Activated CD4-positive, alpha-beta T cell treated with anti-CD3 and anti-CD28 coated beads for 36 hours (primary cell): ENCODE measurements at regions of chr11 and their contacts with region 1.

Region 1: DNA sequence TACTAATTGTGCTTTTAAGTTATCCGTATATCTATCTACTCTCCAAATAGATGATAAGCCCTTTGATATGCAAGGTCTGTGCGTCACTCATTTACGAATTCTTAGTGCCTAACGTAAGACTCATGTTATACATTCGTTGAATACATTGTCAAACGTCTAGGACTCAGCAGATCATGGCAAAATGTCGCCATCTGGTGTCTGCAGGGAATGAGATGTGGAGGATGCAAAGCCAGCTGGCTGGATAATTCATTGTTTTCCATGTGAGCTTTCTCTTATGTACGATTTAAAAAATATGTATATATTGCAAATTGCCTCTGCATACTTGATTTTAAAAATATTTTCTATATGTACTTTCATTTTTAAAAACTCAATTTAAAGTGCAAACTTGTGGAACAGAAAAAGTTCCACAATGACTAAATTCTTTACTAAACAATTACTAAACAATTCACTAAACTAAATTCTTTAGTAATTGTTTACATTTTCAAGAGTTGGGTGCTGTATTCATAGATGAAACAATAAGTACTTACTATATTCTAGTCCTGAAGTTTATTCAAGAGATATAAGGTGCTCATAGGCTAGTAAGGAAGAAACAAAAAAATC is 33.8 kb downstream of the ZNF202 start:
- DNase-seq: peak; percentile 81
- ATAC-seq: peak; percentile 85
- H3K4me3 Mint-ChIP-seq: no peak overlapping the region
- H3K27ac Mint-ChIP-seq: no peak overlapping the region
- H3K4me1 Mint-ChIP-seq: no peaks in the 10 kb centered on the region
- H3K27me3 Mint-ChIP-seq: peaks cover 12% of the 10 kb centered on the region

Region 2: GRCh38 chr11:123580557-123581275 is 127.0 kb before region 1 on chr11:
- CTCF ChIA-PET with region 1: interaction called, 22 read pairs
- POLR2A ChIA-PET with region 1: no interaction called
- intact Hi-C with region 1: loop called (anchors 1 kb)
- DNase-seq: peak; percentile 84
- ATAC-seq: peak; percentile 89
- H3K4me3 Mint-ChIP-seq: no peak overlapping the region
- H3K27ac Mint-ChIP-seq: no peak overlapping the region
- H3K4me1 Mint-ChIP-seq: peaks cover 10% of the 10 kb centered on the region
- H3K27me3 Mint-ChIP-seq: no peaks in the 10 kb centered on the region

Region 3: GRCh38 chr11:123690485-123690884 is 17.2 kb before region 1 on chr11:
- CTCF ChIA-PET with region 1: interaction called, 13 read pairs
- POLR2A ChIA-PET with region 1: no interaction called
- intact Hi-C with region 1: no loop called
- DNase-seq: peak; percentile 48
- ATAC-seq: peak; percentile 84
- H3K4me3 Mint-ChIP-seq: no peak overlapping the region
- H3K27ac Mint-ChIP-seq: no peak overlapping the region
- H3K4me1 Mint-ChIP-seq: peaks cover 3% of the 10 kb centered on the region
- H3K27me3 Mint-ChIP-seq: peaks cover 20% of the 10 kb centered on the region

Region 4: GRCh38 chr11:123719452-123719851 is 11.7 kb after region 1 on chr11:
- CTCF ChIA-PET with region 1: interaction called, 13 read pairs
- POLR2A ChIA-PET with region 1: no interaction called
- intact Hi-C with region 1: no loop called
- DNase-seq: no peak
- ATAC-seq: no peak
- H3K4me3 Mint-ChIP-seq: no peak overlapping the region
- H3K27ac Mint-ChIP-seq: no peak overlapping the region
- H3K4me1 Mint-ChIP-seq: peaks cover 3% of the 10 kb centered on the region
- H3K27me3 Mint-ChIP-seq: peaks cover 14% of the 10 kb centered on the region

Region 5: GRCh38 chr11:123741159-123742028 is 33.7 kb after region 1 on chr11 and contains the start of gene ZNF202:
- CTCF ChIA-PET with region 1: interaction called, 14 read pairs
- POLR2A ChIA-PET with region 1: no interaction called
- intact Hi-C with region 1: no loop called
- DNase-seq: peak; percentile 96
- ATAC-seq: peak; percentile 96
- H3K4me3 Mint-ChIP-seq: peak within 1 kb of the TSS; percentile 81
- H3K27ac Mint-ChIP-seq: peak within 1 kb of the TSS; percentile 97
- H3K4me1 Mint-ChIP-seq: peaks cover 31% of the 10 kb centered on the region
- H3K27me3 Mint-ChIP-seq: peaks cover 2% of the 10 kb centered on the region
- total RNA-seq, gene ZNF202: 9.5 to 12.1 TPM